ENCODE measurements at regions of chr2 and their contacts with region 1.

Region 1: DNA sequence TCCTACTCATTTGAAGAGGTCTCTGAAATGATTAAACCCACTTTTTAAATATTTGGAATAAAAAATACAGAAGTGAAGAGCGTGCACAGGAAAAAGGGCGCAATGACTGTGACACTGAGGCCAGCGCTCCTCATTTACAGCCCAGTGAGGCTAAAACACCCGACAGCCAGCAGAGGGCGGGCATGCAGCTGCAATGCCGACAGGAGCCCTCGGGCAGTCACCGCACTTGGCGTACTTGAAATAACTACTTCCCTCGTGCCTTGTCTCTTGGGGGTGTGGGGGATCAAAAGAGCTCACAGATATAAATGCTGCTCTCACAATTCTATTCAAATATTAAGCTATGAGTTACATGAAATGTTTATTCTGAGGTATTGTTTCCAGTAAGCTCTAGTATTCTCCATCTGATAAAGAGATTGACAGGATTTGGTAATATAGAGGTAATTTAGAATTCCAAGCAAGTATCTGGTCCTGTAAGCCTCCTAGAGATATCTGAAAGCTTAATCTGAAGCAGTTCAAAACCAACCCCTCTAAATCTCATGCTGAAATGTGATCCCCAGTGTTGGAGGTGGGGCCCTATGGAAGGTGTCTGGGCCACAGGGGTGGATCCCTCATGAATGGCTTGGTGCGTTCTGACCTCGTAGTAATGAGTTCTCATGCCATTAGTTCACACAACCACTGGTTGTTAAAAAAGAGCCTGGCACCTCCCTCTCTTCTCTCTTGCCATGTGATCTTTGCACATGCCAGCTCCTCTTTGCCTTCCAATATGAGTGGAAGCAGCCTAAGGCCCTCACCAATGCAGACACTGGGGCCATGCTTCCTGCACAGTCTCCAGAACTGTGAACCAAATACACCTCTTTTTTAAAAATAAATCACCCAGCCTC is 93.6 kb downstream of the ZAP70 start:
- DNase-seq: peak; percentile 67
- H3K4me3 ChIP-seq: no peak overlapping the region
- H3K27ac ChIP-seq: no peak overlapping the region
- H3K4me1 ChIP-seq: no peaks in the 10 kb centered on the region
- H3K27me3 ChIP-seq: no peaks in the 10 kb centered on the region
- CTCF ChIP-seq: peak; percentile 86 to 95
- POLR2A ChIP-seq: no peak

Region 2: GRCh38 chr2:97792416-97792815 is 14.6 kb before region 1 on chr2:
- CTCF ChIA-PET with region 1: interaction called, 10 read pairs
- POLR2A ChIA-PET with region 1: no interaction called
- dilution Hi-C with region 1: no loop called
- intact Hi-C with region 1: no loop called
- DNase-seq: no peak
- H3K4me3 ChIP-seq: no peak overlapping the region
- H3K27ac ChIP-seq: no peak overlapping the region
- H3K4me1 ChIP-seq: no peaks in the 10 kb centered on the region
- H3K27me3 ChIP-seq: no peaks in the 10 kb centered on the region
- CTCF ChIP-seq: no peak
- POLR2A ChIP-seq: no peak

Region 3: GRCh38 chr2:97849881-97850528 is 43.0 kb after region 1 on chr2:
- CTCF ChIA-PET with region 1: no interaction called
- POLR2A ChIA-PET with region 1: no interaction called
- dilution Hi-C with region 1: no loop called
- intact Hi-C with region 1: no loop called
- DNase-seq: no peak
- H3K4me3 ChIP-seq: no peak overlapping the region
- H3K27ac ChIP-seq: no peak overlapping the region
- H3K4me1 ChIP-seq: no peaks in the 10 kb centered on the region
- H3K27me3 ChIP-seq: no peaks in the 10 kb centered on the region
- CTCF ChIP-seq: no peak
- POLR2A ChIP-seq: no peak

Region 4: DNA sequence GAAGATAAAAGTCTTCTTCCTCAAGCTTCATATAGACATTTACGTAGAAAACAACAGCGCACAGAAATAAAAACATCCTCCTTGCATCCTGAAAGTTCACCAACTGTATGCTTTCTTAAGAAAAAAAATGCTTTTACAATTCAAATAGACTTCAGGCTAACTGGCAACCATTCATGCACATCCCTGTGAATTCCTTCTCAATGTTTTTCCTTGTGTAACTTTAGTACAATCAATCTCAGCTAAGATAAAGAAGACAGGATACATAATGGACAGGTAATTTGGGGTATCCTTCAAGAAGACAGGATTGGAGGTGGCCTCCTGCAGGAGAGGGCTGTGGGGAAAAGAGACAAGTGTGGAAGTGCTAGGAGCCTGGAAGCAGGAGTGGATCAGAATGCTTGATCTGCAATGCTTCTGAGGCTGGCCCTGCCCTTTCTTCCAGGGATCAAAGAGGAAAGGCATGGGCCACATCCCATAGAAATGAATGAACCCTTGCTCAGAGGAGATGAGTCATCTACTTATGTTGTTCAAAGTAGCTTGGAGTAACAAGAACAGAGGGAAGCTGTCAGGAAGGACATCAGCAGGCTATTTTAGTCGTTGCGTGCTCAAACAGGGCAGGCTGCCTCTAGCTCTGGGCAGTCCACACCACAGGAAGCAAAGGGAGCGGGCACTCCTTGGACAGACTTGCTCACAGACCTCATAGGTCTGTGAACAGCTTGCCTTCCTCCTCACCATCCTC is 62.2 kb after region 1 on chr2:
- CTCF ChIA-PET with region 1: interaction called, 8 read pairs
- POLR2A ChIA-PET with region 1: no interaction called
- dilution Hi-C with region 1: no loop called
- intact Hi-C with region 1: loop called (anchors 1 kb)
- DNase-seq: peak; percentile 95
- H3K4me3 ChIP-seq: no peak overlapping the region
- H3K27ac ChIP-seq: peak overlapping the region; percentile 65
- H3K4me1 ChIP-seq: peaks cover 29% of the 10 kb centered on the region
- H3K27me3 ChIP-seq: no peaks in the 10 kb centered on the region
- CTCF ChIP-seq: no peak
- POLR2A ChIP-seq: peak; percentile 22

Region 5: DNA sequence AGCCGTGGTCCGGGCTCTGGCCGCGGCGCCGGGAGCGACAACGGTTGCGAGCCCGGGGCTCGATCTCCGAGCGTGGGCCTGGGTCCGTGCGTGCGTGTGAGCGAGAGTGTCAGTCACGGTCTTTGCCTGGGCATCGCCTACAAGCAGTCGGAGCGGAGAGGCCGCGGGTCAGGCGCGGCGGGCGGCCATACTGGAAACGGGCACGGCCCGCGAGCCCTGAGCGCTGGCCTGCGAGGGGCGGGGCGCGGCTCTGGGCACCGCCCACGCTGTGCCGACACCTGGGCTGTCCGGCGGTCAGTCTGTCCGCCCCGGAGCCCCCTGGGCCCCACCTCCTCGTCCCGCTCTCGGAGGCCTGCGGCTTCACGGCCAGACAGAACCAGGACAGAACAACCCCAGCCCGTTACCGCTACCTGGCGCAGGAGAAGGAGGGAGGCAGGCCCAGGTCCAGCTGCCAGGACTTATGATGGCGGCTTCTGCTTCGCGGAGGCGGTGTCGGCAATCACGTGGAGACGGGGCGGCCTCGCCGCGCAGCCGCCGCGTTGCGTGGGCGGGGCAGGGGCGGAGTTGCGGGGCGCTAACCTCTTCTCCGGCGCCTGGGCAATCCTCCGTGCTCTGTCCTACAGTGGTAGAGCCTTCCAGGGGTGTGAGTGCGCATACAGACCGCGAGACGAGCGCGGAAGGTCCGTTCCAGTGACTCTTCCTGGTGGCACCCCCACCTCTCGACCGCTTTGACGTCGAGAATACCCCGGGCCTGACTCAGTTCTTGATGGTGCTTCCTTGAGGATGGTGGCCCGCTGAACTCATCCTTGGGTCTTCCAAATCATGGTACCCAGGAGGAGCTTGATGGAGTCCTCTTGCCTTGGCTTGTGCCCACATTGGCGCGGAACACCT is 189.0 kb after region 1 on chr2 and contains the start of gene TMEM131:
- CTCF ChIA-PET with region 1: interaction called, 6 read pairs
- POLR2A ChIA-PET with region 1: no interaction called
- dilution Hi-C with region 1: no loop called
- intact Hi-C with region 1: loop called (anchors 1 kb)
- DNase-seq: peak; percentile 94
- H3K4me3 ChIP-seq: peak within 1 kb of the TSS; percentile 59 to 99 (median 97)
- H3K27ac ChIP-seq: peak within 1 kb of the TSS; percentile 79
- H3K4me1 ChIP-seq: peaks cover 17% of the 10 kb centered on the region
- H3K27me3 ChIP-seq: peaks cover 2 to 7% of the 10 kb centered on the region in 2 experiments
- CTCF ChIP-seq: no peak
- POLR2A ChIP-seq: peak; percentile 69
- total RNA-seq, gene TMEM131: 24.1 and 28.6 TPM in 2 replicates

Measured in endothelial cell of umbilical vein (primary cell).